Activated T-helper 1 cell treated with anti-CD3 and anti-CD28 coated beads, Interleukin-12 subunit alpha, Interleukin-12 subunit beta, Interleukin-2, Interleukin-4 antibody, amounts not matched to agents 30 ng/mL and 10 ng/mL and 1 ng/mL, durations not matched to agents 14 hours and 24 hours and 36 hours (primary cell): ENCODE measurements at regions of chr22 and their contacts with region 1.

Region 1: GRCh38 chr22:39236321-39237317 is 8.2 kb downstream of the PDGFB start:
- DNase-seq: peak; percentile 17
- H3K4me3 Mint-ChIP-seq: peak overlapping the region; percentile 40
- H3K27ac Mint-ChIP-seq: no peak overlapping the region
- H3K4me1 Mint-ChIP-seq: peaks cover 38% of the 10 kb centered on the region
- H3K27me3 Mint-ChIP-seq: peaks cover 66% of the 10 kb centered on the region

Region 2: DNA sequence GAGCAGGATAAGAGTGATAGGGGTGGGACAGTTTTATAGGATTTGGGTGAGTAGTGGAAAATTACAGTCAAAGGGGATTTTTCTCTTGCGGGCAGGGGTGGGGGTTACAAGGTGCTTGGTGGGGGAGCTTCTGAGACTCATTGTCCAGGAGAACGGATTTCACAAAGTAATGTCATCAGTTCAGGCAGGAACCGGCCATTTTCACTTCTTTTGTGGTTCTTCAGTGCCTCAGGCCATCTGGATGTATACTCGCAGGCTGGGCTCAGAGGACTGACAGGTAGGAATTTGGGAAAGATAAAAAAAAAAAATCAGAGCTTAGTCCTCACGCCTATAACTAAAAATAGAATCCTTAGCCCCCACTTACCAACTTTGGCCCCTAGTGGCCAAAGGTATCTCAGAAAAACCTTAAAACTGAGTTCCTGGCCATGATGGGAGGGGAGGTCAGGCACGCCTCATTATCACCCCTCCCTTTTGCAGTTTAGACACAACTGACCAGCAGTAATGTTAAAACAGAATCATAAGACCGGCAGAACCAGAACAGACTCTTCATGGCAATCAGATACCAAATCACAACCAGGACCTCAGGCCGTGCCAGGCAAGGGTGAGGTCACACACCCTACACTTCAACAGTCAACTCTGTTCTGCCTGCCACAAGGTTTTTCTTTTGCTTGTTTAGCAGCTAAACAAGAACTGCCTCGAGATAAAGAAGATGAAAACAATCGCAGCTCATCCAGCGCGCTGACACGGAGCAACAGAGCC is 168.4 kb before region 1 on chr22:
- intact Hi-C with region 1: no loop called
- DNase-seq: no peak
- H3K4me3 Mint-ChIP-seq: no peak overlapping the region
- H3K27ac Mint-ChIP-seq: no peak overlapping the region
- H3K4me1 Mint-ChIP-seq: peaks cover 5% of the 10 kb centered on the region
- H3K27me3 Mint-ChIP-seq: no peaks in the 10 kb centered on the region

Region 3: GRCh38 chr22:39117585-39118191 is 118.9 kb before region 1 on chr22:
- intact Hi-C with region 1: no loop called
- DNase-seq: peak; percentile 53
- H3K4me3 Mint-ChIP-seq: peak overlapping the region; percentile 45
- H3K27ac Mint-ChIP-seq: peak overlapping the region; percentile 86
- H3K4me1 Mint-ChIP-seq: peaks cover 61% of the 10 kb centered on the region
- H3K27me3 Mint-ChIP-seq: no peaks in the 10 kb centered on the region

Region 4: DNA sequence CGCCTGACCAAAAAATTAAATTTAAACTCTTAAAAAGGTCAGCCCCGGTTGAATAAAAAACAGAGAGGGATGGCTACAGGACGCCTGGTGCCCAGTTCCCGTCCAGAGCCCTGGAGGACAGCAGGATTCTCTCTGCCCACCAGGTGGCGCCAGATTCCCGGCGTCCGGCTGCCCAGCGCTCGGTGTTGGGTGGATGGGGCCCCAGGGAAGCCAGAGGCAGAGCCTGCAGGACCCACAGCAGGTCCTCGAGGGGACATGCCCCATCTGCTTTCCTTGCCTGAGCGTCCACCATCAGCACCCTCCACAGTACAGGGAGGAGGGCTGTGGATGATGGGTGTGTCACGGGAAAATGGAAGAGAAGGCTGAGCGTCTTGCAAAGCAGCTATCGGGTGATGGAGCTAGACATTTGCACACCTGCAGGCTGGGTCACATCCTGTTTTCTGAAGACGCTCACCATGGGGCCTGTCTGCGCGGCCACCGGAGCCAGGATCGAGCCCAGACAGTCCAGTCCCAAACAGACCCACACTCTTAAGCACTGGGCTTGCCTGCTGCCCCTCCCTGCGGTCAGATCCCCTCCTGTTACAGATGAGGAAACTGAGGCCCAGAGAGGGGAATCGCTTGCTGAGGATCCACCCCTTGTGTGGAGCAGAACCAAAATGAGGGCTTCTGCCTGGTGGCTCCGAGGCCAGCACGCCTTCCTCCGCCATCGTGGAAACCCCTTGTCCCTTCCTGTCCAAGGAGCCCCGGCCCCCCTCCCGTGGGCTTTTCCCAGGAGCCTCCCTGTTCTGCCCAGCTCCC is 65.6 kb before region 1 on chr22:
- intact Hi-C with region 1: loop called (anchors 5 kb)
- DNase-seq: peak; percentile 79
- H3K4me3 Mint-ChIP-seq: peak overlapping the region; percentile 75
- H3K27ac Mint-ChIP-seq: peak overlapping the region; percentile 63
- H3K4me1 Mint-ChIP-seq: peaks cover 40% of the 10 kb centered on the region
- H3K27me3 Mint-ChIP-seq: peaks cover 5% of the 10 kb centered on the region

Region 5: DNA sequence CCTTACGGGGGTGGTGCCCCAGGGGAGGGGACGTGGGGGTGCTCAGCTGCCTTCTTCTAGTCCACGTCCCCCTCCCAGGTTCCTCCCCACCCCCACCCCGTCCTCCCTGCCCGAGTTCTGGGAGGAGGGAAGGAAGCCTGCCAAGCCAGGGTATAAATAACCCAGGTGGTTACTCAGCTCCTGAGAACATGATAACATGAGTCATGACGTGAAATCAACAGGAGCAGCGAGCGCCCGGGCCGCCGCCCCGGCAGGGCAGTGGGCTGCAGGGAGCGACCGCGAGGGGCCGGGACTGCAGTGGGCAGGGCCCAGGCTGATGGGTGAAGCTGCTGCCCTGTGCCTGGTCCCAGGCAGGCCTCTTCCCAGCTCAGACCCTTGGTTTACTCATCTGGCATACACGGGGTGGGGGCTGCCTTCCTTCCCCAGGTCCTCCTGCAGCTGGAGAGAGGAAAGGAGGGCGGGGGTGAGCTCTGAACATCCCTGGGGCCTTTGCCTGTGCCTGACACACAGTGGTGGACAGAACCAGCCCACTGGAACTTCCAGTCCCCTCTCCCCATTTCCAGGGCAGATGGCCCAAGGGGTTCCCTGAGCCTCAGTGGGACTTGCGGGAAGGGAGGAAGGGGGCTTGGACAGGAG is 16.9 kb after region 1 on chr22:
- intact Hi-C with region 1: loop called (anchors 2 kb)
- DNase-seq: peak; percentile 41
- H3K4me3 Mint-ChIP-seq: no peak overlapping the region
- H3K27ac Mint-ChIP-seq: no peak overlapping the region
- H3K4me1 Mint-ChIP-seq: peaks cover 30% of the 10 kb centered on the region
- H3K27me3 Mint-ChIP-seq: peaks cover 6% of the 10 kb centered on the region

Region 6: GRCh38 chr22:39266398-39267030 is 29.9 kb after region 1 on chr22:
- intact Hi-C with region 1: loop called (anchors 2 kb)
- DNase-seq: peak; percentile 28
- H3K4me3 Mint-ChIP-seq: no peak overlapping the region
- H3K27ac Mint-ChIP-seq: peak overlapping the region; percentile 89
- H3K4me1 Mint-ChIP-seq: peaks cover 28% of the 10 kb centered on the region
- H3K27me3 Mint-ChIP-seq: peaks cover 2% of the 10 kb centered on the region